AG04449 (cell line): ENCODE measurements at regions of chr4 and their contacts with region 1.

Region 1: DNA sequence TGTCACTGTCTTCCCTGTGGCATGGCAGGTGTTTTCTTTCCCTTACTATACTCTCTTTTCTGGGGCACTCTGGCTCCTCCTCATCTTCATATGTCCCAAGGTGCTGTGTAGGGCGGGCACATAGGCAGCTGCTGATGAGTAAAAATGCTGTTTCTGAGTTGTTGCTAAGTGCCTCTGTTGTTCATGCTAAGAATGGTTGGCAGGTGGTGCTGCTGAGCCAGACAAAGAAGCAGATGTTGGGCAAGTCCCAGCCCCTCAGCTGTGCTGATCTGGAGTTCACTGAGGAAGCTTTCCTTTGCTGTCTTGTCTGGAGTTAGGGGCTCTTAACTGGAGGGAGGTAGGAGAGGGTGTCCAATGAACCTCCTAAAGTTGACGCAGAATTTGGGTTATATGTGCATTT is 40.6 kb downstream of the HADH start:
- DNase-seq: peak; percentile 21
- H3K4me3 ChIP-seq: no peak overlapping the region
- CTCF ChIP-seq: peak; percentile 69

Region 2: DNA sequence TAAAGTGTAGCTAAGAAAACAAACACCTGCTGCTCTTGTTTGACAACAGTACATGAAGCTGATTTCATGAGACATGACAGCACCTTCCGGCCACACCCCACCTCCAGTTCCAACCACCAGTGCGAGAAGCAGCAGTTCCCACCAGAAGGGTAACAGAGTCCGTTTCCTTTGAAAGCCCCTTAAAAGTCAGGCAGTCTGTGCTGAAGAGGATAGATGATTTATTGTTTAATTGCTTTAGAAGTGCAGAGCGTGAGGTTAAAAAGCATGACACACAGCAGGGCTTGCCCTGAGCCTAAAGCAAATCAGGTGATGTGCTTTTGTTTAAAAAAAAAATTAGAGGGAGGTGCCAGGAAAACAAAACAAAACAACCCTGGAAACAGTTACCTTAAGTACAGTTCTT is 42.0 kb after region 1 on chr4:
- CTCF ChIA-PET with region 1: no interaction called
- POLR2A ChIA-PET with region 1: no interaction called
- DNase-seq: no peak
- H3K4me3 ChIP-seq: no peak overlapping the region
- CTCF ChIP-seq: no peak

Region 3: GRCh38 chr4:108581083-108581482 is 550.8 kb after region 1 on chr4:
- CTCF ChIA-PET with region 1: interaction called, 11 read pairs
- POLR2A ChIA-PET with region 1: no interaction called
- DNase-seq: no peak
- H3K4me3 ChIP-seq: no peak overlapping the region
- CTCF ChIP-seq: no peak